ENCODE measurements at regions of chr14 and their contacts with region 1.

Region 1: DNA sequence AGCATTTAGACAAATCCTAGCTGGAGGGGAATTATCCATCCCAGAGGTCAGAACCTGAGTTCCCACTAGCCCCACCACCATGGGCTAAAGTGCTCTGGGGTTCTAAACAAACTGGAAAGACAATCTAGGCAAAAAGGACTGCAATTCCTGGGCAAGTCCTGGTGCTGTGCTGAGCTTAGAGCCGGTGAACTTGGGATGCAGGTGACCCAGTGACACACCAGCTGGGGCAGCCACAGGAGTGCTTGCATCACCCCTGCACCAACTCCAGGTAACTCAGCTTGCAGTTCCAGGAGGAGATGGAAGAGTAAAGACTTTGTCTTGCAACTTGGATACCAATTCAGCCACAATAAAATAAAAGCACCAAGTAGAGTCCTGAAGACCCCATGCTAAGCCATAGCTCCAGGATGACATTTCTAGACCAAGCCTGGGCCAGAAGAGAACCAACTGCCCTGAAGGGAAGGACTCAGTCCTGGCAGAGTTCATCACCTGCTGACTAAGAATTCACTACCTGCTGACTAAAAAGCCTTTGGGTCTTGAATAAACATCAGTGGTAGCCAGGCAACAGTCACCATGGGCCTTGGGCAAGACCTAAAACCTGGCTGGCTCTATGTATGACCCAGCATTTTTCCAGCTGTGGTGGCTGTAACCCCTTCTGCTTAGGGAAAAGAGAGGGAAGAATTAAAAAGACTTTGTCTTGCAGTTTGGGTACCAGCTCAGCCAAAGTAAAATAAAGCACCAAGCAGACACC is 223.4 kb upstream of the DIO2 start:
- DNase-seq: peak; percentile 89
- H3K4me3 ChIP-seq: no peak overlapping the region
- H3K27ac ChIP-seq: peak overlapping the region; percentile 79
- H3K4me1 ChIP-seq: peaks cover 15% of the 10 kb centered on the region
- H3K27me3 ChIP-seq: no peaks in the 10 kb centered on the region
- CTCF ChIP-seq: no peak

Region 2: GRCh38 chr14:80136361-80136760 is 298.4 kb before region 1 on chr14:
- CTCF ChIA-PET with region 1: no interaction called
- dilution Hi-C with region 1: no loop called
- in situ Hi-C with region 1: no loop called
- intact Hi-C with region 1: loop called (anchors 10 kb)
- DNase-seq: peak; percentile 92
- H3K4me3 ChIP-seq: no peak overlapping the region
- H3K27ac ChIP-seq: no peak overlapping the region
- H3K4me1 ChIP-seq: peaks cover 18% of the 10 kb centered on the region
- H3K27me3 ChIP-seq: no peaks in the 10 kb centered on the region
- CTCF ChIP-seq: no peak

Region 3: DNA sequence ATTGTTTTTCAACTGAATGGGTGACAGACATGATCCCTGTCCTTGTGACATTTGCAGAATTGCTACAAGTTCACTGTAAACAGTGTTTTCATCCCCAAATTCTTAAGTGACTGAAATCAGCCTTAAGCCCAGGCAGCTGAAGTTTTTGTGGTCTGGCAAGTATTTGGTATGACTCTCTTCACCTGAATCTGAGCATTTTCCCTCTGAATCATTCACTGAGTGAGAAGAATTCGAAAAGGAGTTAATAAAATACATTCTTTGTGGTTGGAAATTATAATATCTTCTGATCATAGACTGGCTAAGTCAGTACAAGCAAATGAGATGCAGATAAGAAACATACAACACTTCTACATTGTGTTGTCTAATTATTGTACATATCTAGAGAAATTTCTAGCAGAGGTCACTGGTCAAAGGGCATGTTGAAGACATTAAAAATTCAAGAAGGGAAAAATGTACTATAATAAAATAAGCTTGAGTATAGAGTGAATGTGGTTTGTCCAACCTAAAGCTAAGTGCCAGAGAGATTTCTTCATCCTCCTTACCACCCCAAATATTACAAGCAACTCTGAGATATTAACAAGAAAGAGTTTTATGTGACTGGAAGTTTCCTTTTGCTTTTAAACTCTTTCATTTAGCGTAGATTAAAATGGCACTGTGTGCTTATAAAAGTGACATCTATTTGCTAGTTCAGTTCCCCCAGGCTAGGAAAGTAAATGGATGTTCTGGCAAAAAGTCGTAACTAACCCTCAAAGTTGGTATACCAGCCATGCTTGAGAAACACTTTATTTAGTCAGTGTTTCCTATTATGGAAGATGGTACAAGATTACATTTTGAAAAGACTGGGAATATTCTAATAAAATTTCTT is 45.5 kb before region 1 on chr14:
- CTCF ChIA-PET with region 1: no interaction called
- dilution Hi-C with region 1: loop called (anchors 5 kb)
- in situ Hi-C with region 1: no loop called
- intact Hi-C with region 1: loop called (anchors 2 kb)
- DNase-seq: peak; percentile 82
- H3K4me3 ChIP-seq: no peak overlapping the region
- H3K27ac ChIP-seq: peak overlapping the region; percentile 78
- H3K4me1 ChIP-seq: peaks cover 42% of the 10 kb centered on the region
- H3K27me3 ChIP-seq: no peaks in the 10 kb centered on the region
- CTCF ChIP-seq: no peak